ENCODE measurements at regions of chr1 and their contacts with region 1.

Region 1: DNA sequence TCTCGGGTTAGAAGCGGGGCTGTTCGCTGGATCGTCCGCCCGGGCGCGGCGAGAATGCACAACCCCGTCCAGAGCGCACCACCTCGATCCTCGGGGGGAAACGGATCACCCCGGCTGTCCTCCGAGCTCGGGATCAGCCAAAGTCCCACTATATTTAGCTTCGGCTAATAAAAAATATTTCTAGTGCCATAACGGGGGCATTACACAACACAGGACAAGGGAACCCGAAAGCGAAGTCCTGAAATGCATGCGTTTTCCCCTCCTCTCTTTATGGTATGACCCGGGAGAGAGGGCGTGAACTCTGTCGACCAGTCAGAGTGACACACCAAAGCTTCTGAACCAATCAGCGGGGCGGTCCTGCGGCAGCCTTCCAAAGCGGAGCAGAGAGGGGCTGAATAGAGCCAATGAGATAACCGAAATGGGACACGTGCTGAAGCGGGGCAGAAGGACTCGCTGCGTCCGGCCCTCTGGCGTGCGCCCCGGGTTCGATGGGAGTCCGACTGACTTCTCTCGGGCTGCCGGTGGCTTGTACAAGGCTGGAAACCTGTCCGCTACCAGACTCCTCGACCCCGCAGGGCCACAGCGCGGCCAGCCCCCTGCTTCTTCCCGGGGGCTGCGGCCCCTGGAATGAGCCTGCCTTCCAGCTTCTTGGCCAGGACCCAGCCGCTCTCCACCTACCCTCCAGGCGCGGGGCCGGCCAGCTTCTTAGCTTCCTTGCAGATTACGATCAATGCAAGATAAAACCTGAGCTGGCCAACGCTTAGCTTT is at the start of gene ALDH4A1:
- DNase-seq: peak; percentile 97
- H3K4me3 ChIP-seq: peak within 1 kb of the TSS; percentile 49 to 86 (median 66)
- H3K27ac ChIP-seq: peak within 1 kb of the TSS; percentile 86 to 93 (median 91)
- H3K4me1 ChIP-seq: peaks cover 9 to 28% (median 22%) of the 10 kb centered on the region in 4 donors
- H3K27me3 ChIP-seq: no peaks in the 10 kb centered on the region
- CTCF ChIP-seq: peak in 1 of 5 experiments; percentile 14
- EP300 ChIP-seq: no peak
- POLR2A ChIP-seq: peak; percentile 36
- total RNA-seq, gene ALDH4A1: 3.8 to 6.0 (median 4.8) TPM

Region 2: GRCh38 chr1:18256282-18257235 is 646.1 kb before region 1 on chr1:
- in situ Hi-C with region 1: no loop called
- intact Hi-C with region 1: no loop called
- DNase-seq: peak; percentile 38
- H3K4me3 ChIP-seq: no peak overlapping the region
- H3K27ac ChIP-seq: no peak overlapping the region
- H3K4me1 ChIP-seq: no peaks in the 10 kb centered on the region
- H3K27me3 ChIP-seq: peaks cover 14% of the 10 kb centered on the region
- CTCF ChIP-seq: no peak
- EP300 ChIP-seq: no peak
- POLR2A ChIP-seq: no peak

Region 3: GRCh38 chr1:18956369-18957135 is 53.8 kb after region 1 on chr1 and contains the start of gene IFFO2:
- in situ Hi-C with region 1: no loop called
- intact Hi-C with region 1: loop called (anchors 5 kb)
- DNase-seq: peak; percentile 99
- H3K4me3 ChIP-seq: peak within 1 kb of the TSS; percentile 62 to 91 (median 82)
- H3K27ac ChIP-seq: peak within 1 kb of the TSS; percentile 82 to 91 (median 88)
- H3K4me1 ChIP-seq: peaks cover 3 to 45% (median 27%) of the 10 kb centered on the region in 4 donors
- H3K27me3 ChIP-seq: no peaks in the 10 kb centered on the region
- CTCF ChIP-seq: no peak
- EP300 ChIP-seq: no peak
- POLR2A ChIP-seq: peak; percentile 70
- total RNA-seq, gene IFFO2: 5.0 to 145 (median 13.6) TPM

Region 4: GRCh38 chr1:18972531-18972930 is 69.8 kb after region 1 on chr1:
- in situ Hi-C with region 1: loop called in 1 of 4 experiments (anchors 5 kb)
- intact Hi-C with region 1: no loop called
- DNase-seq: no peak
- H3K4me3 ChIP-seq: no peak overlapping the region
- H3K27ac ChIP-seq: no peak overlapping the region
- H3K4me1 ChIP-seq: peaks cover 0 to 7% (median 0%) of the 10 kb centered on the region in 4 donors
- H3K27me3 ChIP-seq: no peaks in the 10 kb centered on the region
- CTCF ChIP-seq: peak in 4 of 5 experiments; percentile 28 to 43 (median 32)
- EP300 ChIP-seq: no peak
- POLR2A ChIP-seq: no peak

Region 5: DNA sequence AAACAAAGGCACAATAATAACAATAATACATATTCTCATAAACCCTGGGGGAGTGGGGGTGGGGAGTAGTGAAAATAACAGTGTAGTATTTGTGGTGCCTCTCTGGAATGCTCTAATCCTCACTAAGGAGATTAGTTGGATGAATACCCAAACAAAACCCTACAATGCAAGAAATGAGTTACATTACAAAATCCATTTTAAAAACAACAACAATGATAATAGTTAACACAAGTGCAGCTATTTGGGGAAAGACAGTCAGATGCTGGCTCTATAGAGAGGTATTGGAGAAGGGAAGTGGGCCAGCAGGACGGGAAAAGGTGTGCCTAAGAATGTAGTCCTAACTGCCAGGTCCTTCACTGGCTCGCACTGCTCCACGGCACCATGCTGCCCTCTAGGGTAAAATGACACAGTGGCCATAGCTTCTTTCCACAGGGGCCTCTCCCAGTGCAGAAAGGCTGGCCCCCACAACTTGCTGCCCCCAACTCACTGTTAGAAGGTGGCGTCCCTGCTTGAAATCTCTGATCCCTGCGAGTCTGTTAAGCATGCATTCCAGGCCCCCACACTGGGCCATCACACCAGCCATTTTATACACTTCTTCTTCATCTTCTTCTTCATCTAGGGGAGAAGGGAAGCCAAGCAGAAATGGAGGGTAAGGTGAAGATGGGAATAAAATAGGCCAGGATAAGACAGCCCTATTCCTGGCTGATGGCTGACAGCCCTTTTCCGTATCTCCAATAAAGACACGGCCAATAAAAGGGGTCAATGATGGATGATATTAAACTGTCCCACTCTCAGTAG is 193.5 kb after region 1 on chr1:
- in situ Hi-C with region 1: loop called in 3 of 4 experiments (anchors 10 kb)
- intact Hi-C with region 1: no loop called
- DNase-seq: peak; percentile 58
- H3K4me3 ChIP-seq: no peak overlapping the region
- H3K27ac ChIP-seq: no peak overlapping the region
- H3K4me1 ChIP-seq: peaks cover 0 to 12% (median 9%) of the 10 kb centered on the region in 4 donors
- H3K27me3 ChIP-seq: no peaks in the 10 kb centered on the region
- CTCF ChIP-seq: peak; percentile 39 to 65 (median 51)
- EP300 ChIP-seq: no peak
- POLR2A ChIP-seq: no peak

Region 6: GRCh38 chr1:19240673-19241538 is 338.2 kb after region 1 on chr1:
- in situ Hi-C with region 1: loop called in 2 of 4 experiments (anchors 25 kb)
- intact Hi-C with region 1: no loop called
- DNase-seq: peak; percentile 57
- H3K4me3 ChIP-seq: no peak overlapping the region
- H3K27ac ChIP-seq: peak overlapping the region; percentile 18 to 49 (median 38)
- H3K4me1 ChIP-seq: peaks cover 0 to 5% (median 0%) of the 10 kb centered on the region in 4 donors
- H3K27me3 ChIP-seq: no peaks in the 10 kb centered on the region
- CTCF ChIP-seq: peak; percentile 90 to 98 (median 96)
- EP300 ChIP-seq: no peak
- POLR2A ChIP-seq: no peak